ENCODE measurements at regions of chrX and their contacts with region 1.

Region 1: DNA sequence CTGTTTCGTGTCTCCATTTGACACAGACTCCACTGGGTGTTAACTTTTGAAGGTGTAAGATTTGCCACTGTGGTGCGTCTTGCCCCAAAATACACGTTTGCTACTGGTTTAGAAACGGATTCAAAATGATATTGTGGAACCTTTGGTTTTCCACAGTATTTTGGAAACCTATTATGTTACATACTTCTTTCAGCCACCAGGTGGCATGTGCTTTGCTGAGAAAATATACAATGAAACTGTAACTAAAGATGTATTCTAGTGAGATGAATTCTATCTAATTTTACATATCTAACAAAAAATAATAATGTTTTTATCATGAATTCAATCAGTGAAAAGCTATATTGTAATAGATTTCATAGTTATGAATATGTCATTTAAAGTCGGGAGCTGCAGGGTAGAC is 28.4 kb upstream of the SLITRK4 start:
- DNase-seq: no peak
- ATAC-seq: peak; percentile 53; the same call in 2 of the 3 replicates
- H3K4me3 ChIP-seq: no peak overlapping the region
- H3K27ac ChIP-seq: no peak overlapping the region
- H3K4me1 ChIP-seq: no peaks in the 10 kb centered on the region
- H3K27me3 ChIP-seq: no peaks in the 10 kb centered on the region
- CTCF ChIP-seq: peak; percentile 41 to 52 (median 42); a peak in 5 of 6 replicates
- EP300 ChIP-seq: no peak
- POLR2A ChIP-seq: no peak
- RAD21 ChIP-seq: peak; percentile 46

Region 2: DNA sequence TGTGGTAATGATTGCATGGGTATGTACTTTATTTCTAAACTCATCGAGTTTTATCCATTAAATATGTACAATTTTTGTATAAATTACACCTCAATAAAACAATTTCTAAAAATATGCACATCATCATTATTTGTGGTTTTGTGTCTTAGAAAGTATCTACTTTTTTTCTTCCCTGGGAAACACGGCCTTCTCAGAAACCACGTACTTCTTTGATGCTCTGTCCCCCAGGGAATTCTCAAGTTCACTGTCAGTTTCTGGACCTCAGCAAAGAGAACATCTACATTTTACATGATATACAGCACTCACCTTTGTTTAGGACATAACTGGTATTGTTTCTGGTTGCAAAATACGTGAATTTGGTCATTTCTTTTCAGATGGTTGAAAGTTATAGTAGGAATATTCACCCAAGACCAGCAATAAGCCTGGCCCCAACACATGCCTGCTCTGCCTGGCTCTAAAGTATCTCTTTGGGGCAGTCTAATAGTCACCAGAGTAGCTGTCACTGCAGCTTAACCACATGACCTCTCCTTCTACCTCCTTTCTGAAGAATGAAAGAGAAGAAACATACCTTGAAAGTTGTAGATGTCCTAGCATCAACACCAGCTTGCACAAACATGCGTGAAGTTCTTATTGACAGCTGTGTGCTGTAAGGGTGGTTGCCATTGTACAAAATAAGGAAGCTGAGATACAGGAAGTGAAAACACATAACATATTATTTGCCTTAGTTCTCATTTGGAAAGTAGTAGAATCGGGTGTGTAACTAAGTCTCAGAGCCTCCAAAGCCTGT is 687.0 kb before region 1 on chrX:
- CTCF ChIA-PET with region 1: no interaction called
- POLR2A ChIA-PET with region 1: no interaction called
- RAD21 ChIA-PET with region 1: no interaction called
- SMC1A ChIA-PET with region 1: no interaction called
- in situ Hi-C with region 1: no loop called
- intact Hi-C with region 1: no loop called
- DNase-seq: peak; percentile 78
- ATAC-seq: peak; percentile 87
- H3K4me3 ChIP-seq: peak overlapping the region; percentile 52
- H3K27ac ChIP-seq: peak overlapping the region; percentile 91
- H3K4me1 ChIP-seq: peaks cover 15% of the 10 kb centered on the region
- H3K27me3 ChIP-seq: no peaks in the 10 kb centered on the region
- CTCF ChIP-seq: no peak
- EP300 ChIP-seq: peak; percentile 48 to 78; a peak in 3 of 4 replicates
- POLR2A ChIP-seq: 0 out of 2 replicates have a peak, but pooled peaks have one; percentile 29
- RAD21 ChIP-seq: peak; percentile 15; the same call in 1 of the 2 replicates

Region 3: GRCh38 chrX:143648705-143649104 is 15.6 kb before region 1 on chrX:
- CTCF ChIA-PET with region 1: interaction called, 11 read pairs
- POLR2A ChIA-PET with region 1: interaction called, 3 read pairs
- RAD21 ChIA-PET with region 1: no interaction called
- SMC1A ChIA-PET with region 1: interaction called, 5 read pairs
- in situ Hi-C with region 1: no loop called
- intact Hi-C with region 1: no loop called
- DNase-seq: no peak
- ATAC-seq: peak; percentile 96
- H3K4me3 ChIP-seq: no peak overlapping the region
- H3K27ac ChIP-seq: no peak overlapping the region
- H3K4me1 ChIP-seq: no peaks in the 10 kb centered on the region
- H3K27me3 ChIP-seq: no peaks in the 10 kb centered on the region
- CTCF ChIP-seq: peak; percentile 21 to 33 (median 31); a peak in 2 of 6 replicates
- EP300 ChIP-seq: no peak
- POLR2A ChIP-seq: no peak
- RAD21 ChIP-seq: no peak